ENCODE measurements at regions of chr14 and their contacts with region 1.

Region 1: DNA sequence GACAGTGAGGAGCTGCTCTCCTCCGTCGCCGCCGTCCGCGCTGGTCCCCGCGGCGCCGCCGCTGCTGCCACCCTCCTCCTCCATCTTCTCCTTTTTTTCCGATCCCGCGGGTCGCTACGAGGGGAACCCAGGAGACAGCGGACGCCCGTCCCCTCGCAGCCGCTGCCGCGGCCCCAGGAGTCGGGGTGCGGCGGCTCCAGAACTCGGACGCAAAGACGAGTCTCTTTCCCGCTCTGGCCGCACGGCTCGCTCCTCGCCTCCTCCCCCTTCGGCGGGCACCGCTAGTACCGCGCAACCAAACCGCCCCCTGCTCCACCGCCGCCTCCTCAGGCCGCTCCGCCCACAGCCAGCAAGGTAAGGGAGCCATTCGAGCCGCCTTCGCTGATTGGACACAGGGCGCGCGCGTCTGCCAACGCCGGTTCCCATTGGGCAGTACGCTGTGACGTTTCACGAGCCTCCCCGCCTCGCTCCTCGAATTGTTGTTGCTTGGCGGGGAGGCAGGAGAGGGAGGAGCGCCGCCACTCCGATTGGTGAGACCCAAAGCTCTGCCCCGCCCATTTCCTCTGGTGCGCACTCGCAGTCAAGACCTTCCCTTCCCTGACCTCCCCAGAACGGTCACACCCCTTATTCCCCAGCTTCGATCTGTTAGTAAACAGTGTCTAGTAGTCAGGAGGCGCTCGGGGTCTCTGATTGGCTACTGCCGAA is at the start of gene RPS6KA5:
- DNase-seq: peak; percentile 100
- H3K4me3 ChIP-seq: peak within 1 kb of the TSS; percentile 83
- H3K27ac ChIP-seq: peak within 1 kb of the TSS; percentile 78
- H3K4me1 ChIP-seq: peaks cover 32% of the 10 kb centered on the region
- CTCF ChIP-seq: no peak
- total RNA-seq, gene RPS6KA5: 9.0 and 9.6 TPM in 2 replicates

Region 2: DNA sequence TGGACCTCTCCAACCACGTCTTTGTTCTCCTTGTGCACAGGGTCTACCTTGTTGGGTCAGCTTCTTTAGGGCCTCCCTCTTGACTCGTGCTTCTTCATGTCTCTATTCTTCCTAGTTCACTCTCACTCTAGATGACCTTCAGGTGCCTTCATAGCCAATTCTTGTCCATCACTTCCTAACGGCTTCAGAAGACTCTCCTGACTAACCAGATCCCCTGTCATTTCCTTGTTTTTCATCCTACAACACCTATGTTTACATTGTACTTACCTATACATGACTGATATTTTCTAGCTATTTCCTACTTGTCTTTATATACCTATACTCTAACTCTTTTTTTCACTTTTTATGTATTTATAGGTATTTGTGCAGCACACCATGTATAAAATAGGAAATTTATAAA is 117.1 kb before region 1 on chr14:
- CTCF ChIA-PET with region 1: no interaction called
- POLR2A ChIA-PET with region 1: no interaction called
- intact Hi-C with region 1: no loop called
- DNase-seq: no peak
- H3K4me3 ChIP-seq: no peak overlapping the region
- H3K27ac ChIP-seq: no peak overlapping the region
- H3K4me1 ChIP-seq: no peaks in the 10 kb centered on the region
- CTCF ChIP-seq: no peak

Region 3: DNA sequence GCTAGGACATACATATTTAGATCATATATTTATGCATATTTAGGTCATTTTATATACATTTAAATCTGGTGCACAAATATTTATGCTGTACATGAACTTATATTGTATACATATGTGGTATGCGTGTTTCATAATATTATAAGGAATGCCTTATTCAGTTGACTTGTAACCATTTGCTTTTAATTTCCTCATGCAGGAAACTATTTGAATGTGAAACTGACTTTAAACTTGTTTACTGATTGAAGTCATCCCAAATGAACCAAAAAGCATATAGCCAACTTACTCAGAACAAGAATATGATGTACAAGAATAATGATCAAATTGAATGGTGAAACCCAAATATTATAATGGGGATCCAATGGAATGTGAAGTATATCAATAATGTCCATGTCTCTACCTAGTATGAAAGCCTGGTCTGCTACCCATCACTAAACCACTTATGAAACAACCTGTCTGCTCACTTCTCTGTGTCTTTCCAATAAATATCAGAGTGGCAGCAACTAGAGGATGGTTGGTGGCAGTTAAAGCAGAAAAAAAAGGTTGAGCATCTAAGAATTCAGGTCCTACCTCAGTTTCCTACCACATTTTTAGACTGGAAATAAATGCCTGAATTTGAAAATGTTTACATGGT is 38.4 kb before region 1 on chr14:
- CTCF ChIA-PET with region 1: no interaction called
- POLR2A ChIA-PET with region 1: interaction called, 5 read pairs
- intact Hi-C with region 1: loop called (anchors 2 kb)
- DNase-seq: no peak
- H3K4me3 ChIP-seq: peak overlapping the region; percentile 48
- H3K27ac ChIP-seq: peak overlapping the region; percentile 27
- H3K4me1 ChIP-seq: peaks cover 6% of the 10 kb centered on the region
- CTCF ChIP-seq: no peak

Region 4: DNA sequence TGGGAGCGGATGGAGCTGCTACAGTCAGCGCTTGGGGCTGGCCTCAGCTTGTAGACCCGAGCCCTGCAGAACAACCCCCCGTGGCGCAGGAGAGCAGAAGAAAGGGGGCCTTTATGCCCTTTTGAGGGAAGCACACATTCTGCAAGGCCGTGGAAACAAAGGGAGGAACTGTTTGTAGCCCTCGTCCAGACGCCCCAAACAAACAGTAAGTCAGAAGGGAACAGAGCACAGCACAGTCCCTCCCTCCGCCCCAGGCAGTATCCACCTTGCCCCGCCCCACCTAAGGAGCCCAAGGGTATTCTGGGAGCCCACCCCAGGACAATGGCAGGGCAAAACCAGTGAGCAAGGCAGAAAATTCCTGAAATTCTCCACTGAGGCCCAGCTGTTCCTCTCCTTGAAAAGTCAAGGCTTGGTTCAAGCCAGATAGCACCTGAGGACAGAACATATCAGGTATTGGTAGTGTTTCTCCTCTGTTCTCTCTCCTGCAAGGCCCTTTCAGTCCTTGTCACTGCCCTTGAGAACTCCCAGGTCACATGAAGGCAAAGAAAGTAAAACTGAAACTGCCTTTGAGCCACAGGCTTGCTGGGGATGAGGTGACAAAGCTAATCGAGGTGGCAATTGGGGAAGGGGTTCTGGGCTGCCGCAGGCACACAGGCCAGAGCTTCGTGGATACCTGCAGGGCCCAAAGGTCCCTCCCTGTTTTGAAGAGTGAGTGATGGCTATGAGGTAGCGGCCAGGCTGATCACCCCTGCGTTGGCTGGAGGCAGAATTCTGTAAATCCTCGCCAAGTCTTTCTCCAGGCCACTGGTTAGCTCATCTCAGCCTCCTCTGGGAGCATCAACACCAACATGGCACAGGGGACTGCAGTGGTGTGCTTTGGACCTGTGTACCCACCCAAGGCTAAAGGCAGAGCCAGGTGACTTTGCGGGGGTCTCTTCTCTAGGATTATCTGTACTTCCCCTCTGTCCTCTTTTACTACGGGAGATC is 53.9 kb after region 1 on chr14:
- CTCF ChIA-PET with region 1: interaction called, 3 read pairs
- POLR2A ChIA-PET with region 1: interaction called, 14 read pairs
- intact Hi-C with region 1: loop called (anchors 1 kb)
- DNase-seq: peak; percentile 83
- H3K4me3 ChIP-seq: peak overlapping the region; percentile 86
- H3K27ac ChIP-seq: peak overlapping the region; percentile 73
- H3K4me1 ChIP-seq: peaks cover 21% of the 10 kb centered on the region
- CTCF ChIP-seq: no peak

Region 5: GRCh38 chr14:91510174-91511042 is 449.9 kb after region 1 on chr14 and contains the start of gene PPP4R3A:
- CTCF ChIA-PET with region 1: no interaction called
- POLR2A ChIA-PET with region 1: no interaction called
- intact Hi-C with region 1: loop called (anchors 2 kb)
- DNase-seq: peak; percentile 96
- H3K4me3 ChIP-seq: peak within 1 kb of the TSS; percentile 85
- H3K27ac ChIP-seq: peak within 1 kb of the TSS; percentile 87
- H3K4me1 ChIP-seq: peaks cover 30% of the 10 kb centered on the region
- CTCF ChIP-seq: no peak
- total RNA-seq, gene PPP4R3A: 80.7 and 84.7 TPM in 2 replicates

Region 6: GRCh38 chr14:91836119-91836881 is 775.8 kb after region 1 on chr14:
- CTCF ChIA-PET with region 1: no interaction called
- POLR2A ChIA-PET with region 1: no interaction called
- intact Hi-C with region 1: no loop called
- DNase-seq: peak; percentile 8
- H3K4me3 ChIP-seq: peak overlapping the region; percentile 36
- H3K27ac ChIP-seq: no peak overlapping the region
- H3K4me1 ChIP-seq: peaks cover 9% of the 10 kb centered on the region
- CTCF ChIP-seq: no peak